ENCODE measurements at regions of chr6 and their contacts with region 1.

Region 1: GRCh38 chr6:170295510-170296422 is 4.9 kb upstream of the DLL1 start:
- DNase-seq: peak; percentile 59
- H3K4me3 ChIP-seq: peak overlapping the region; percentile 56 to 64 (median 57)
- H3K27ac ChIP-seq: peak overlapping the region; percentile 9
- H3K4me1 ChIP-seq: peaks cover 28% of the 10 kb centered on the region
- H3K27me3 ChIP-seq: no peaks in the 10 kb centered on the region
- CTCF ChIP-seq: no peak

Region 2: DNA sequence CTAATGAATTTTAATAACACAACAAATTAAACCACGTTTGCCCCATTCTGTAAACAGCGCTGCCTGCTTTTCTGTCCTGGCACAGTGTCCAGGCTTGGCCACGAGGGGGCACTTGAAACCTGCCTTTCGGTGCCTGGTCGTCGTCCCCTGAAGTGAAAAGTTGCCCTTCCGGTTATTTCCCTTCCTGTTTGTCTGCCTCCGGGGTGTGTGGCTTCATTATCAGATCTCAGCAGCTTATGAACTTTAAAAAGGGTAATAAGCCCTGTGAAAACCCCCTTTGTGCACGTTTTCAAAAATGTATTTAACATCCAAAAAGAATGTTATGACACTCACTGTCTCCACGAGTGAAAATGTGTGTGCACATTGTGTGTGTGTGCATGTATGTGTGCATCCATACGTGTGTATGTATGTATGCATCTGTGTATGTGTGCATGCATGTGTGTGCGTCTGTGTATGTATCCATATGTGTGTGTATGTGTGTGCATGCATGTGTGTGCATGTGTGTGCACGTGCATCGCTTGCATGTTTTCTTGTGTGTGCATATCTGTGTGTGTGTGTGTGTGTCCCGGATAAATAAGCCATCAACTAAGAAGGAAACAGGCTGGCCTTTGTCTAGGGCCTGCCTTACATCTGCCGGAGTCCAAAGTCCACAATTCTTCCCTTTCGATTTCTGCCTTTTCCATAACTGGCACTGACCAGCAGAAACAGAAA is 1400.5 kb before region 1 on chr6:
- CTCF ChIA-PET with region 1: no interaction called
- dilution Hi-C with region 1: no loop called
- in situ Hi-C with region 1: no loop called
- intact Hi-C with region 1: loop called (anchors 5 kb)
- DNase-seq: peak; percentile 64
- H3K4me3 ChIP-seq: no peak overlapping the region
- H3K27ac ChIP-seq: no peak overlapping the region
- H3K4me1 ChIP-seq: peaks cover 4% of the 10 kb centered on the region
- H3K27me3 ChIP-seq: no peaks in the 10 kb centered on the region
- CTCF ChIP-seq: peak; percentile 95 to 96

Region 3: GRCh38 chr6:169950558-169950957 is 345.2 kb before region 1 on chr6:
- CTCF ChIA-PET with region 1: no interaction called
- dilution Hi-C with region 1: no loop called
- in situ Hi-C with region 1: no loop called
- intact Hi-C with region 1: loop called (anchors 1 kb)
- DNase-seq: peak; percentile 7
- H3K4me3 ChIP-seq: no peak overlapping the region
- H3K27ac ChIP-seq: no peak overlapping the region
- H3K4me1 ChIP-seq: no peaks in the 10 kb centered on the region
- H3K27me3 ChIP-seq: no peaks in the 10 kb centered on the region
- CTCF ChIP-seq: peak; percentile 31 to 58

Region 4: GRCh38 chr6:169990095-169991030 is 305.4 kb before region 1 on chr6:
- CTCF ChIA-PET with region 1: no interaction called
- dilution Hi-C with region 1: no loop called
- in situ Hi-C with region 1: loop called in 1 of 2 experiments (anchors 25 kb)
- intact Hi-C with region 1: no loop called
- DNase-seq: no peak
- H3K4me3 ChIP-seq: no peak overlapping the region
- H3K27ac ChIP-seq: no peak overlapping the region
- H3K4me1 ChIP-seq: no peaks in the 10 kb centered on the region
- H3K27me3 ChIP-seq: no peaks in the 10 kb centered on the region
- CTCF ChIP-seq: no peak

Region 5: DNA sequence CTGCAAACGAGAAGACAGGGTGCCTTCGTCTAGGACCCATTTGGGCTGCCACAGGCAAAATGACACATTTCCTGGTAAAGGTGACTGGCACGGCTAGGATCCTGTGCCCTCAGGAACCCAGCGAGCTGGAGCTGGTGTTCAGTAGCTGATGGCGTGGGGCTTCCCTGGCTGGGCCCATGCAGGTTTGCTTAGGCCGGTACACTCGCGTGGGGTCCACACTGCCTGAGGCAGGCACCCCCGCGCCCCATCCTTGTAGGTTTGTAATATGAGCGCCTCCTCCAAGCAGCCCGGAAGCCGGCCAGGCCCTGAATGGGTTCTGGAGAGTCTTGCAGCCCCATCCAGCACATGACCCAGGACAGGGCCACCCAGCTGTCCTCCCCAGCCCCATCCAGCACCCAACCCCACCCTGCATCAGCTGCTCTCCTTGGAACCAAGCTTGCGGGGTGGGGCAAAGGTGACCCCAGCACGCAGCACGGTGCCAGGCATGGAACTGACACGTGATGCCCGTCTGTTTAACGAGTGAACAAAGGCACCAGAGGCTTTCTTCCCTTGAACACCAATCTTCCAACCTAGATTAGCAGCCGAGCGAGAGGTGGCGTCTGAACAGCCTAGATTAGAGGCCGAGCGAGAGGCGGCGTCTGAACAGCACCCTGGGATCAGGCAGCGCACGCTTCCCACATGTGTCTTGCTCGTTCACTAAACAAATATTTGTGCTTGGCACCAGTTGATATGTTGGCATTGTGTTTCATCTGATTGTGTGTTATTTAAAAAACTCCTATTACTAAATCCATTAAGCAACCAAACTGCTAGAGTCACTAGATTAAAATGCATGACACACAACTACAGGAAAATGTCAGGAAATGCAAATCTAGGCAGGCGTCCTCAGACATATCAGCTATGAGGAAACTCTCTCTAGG is 116.9 kb before region 1 on chr6:
- CTCF ChIA-PET with region 1: no interaction called
- dilution Hi-C with region 1: no loop called
- in situ Hi-C with region 1: no loop called
- intact Hi-C with region 1: loop called (anchors 5 kb)
- DNase-seq: peak; percentile 69
- H3K4me3 ChIP-seq: no peak overlapping the region
- H3K27ac ChIP-seq: no peak overlapping the region
- H3K4me1 ChIP-seq: peaks cover 17% of the 10 kb centered on the region
- H3K27me3 ChIP-seq: no peaks in the 10 kb centered on the region
- CTCF ChIP-seq: no peak

Region 6: DNA sequence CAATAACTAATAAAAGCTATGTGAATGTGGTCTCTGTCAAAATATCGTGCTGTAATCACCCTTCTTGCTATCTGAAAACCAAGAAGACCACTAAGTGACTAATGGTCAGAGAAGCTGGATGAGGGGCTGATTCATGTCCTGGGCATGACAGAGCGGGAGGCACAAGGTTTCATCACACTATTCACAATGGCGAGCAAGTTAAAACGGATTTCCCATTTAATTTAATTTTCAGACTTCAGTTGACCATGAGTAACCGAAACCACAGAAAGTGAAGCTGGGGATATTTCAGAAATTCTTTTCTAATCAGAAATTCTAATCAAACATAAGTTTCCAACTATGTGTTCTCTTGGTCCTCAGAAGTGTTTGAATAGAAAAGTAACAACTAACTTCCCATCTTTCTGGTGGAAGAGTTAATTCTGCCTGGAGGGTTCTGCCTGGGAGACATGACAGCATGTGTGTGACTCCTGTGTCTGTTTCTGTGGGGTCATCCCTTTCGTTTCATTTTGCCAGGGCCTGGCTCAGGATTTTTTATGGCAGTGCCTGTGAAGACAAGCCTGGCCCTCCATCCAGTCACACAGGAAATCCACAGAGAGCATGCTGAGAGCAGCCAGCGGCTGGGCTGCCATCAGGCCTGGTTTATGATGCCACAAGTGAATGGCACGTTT is 109.7 kb after region 1 on chr6:
- CTCF ChIA-PET with region 1: no interaction called
- dilution Hi-C with region 1: no loop called
- in situ Hi-C with region 1: no loop called
- intact Hi-C with region 1: no loop called
- DNase-seq: peak; percentile 98
- H3K4me3 ChIP-seq: no peak overlapping the region
- H3K27ac ChIP-seq: peak overlapping the region; percentile 98
- H3K4me1 ChIP-seq: peaks cover 39% of the 10 kb centered on the region
- H3K27me3 ChIP-seq: no peaks in the 10 kb centered on the region
- CTCF ChIP-seq: no peak

Region 7: GRCh38 chr6:170516783-170517616 is 221.2 kb after region 1 on chr6:
- CTCF ChIA-PET with region 1: interaction called, 10 read pairs
- dilution Hi-C with region 1: no loop called
- in situ Hi-C with region 1: loop called in 1 of 2 experiments (anchors 10 kb)
- intact Hi-C with region 1: loop called (anchors 1 kb)
- DNase-seq: peak; percentile 68
- H3K4me3 ChIP-seq: no peak overlapping the region
- H3K27ac ChIP-seq: no peak overlapping the region
- H3K4me1 ChIP-seq: no peaks in the 10 kb centered on the region
- H3K27me3 ChIP-seq: no peaks in the 10 kb centered on the region
- CTCF ChIP-seq: peak; percentile 88 to 90